T-cell (primary cell): ENCODE measurements at regions of chr14 and their contacts with region 1.

Region 1: DNA sequence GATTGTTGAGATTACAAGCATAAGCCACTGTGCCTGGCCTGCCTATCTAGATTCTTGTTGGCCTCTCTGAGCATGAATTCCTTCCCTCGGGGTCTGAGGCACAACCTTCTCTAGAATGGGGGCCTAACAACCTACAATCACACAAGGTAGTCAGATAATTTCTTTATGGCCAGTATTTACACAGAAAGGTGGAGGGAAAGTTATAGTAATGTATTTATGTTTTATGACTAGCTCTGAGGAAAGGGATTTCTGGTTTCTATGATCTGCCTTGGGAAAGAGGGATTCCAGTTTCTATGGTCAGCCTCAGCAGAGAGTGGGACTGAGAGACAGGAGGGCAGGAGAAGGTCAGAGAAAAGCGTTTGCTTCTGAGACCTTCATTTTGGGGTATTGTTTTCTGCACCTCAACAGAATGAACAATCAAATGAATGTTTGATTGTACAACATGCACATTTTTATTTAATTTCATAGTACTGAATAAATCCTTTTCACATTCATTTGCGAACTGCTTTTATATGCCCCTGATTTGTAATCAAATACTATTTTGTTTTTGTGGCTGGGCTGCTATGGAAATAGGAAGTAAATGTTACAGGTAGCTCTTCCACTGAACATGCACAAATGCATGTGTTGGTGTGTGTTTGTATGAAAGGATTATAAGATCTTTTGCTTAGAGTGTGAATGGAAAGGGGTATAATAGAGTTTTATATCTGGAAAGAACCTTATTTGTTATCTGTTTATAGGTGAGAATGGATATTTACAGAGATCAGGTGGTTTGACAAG is 499.7 kb upstream of the RGS6 start:
- DNase-seq: no peak
- ATAC-seq: no peak
- H3K4me3 ChIP-seq: no peak overlapping the region
- H3K4me3 Mint-ChIP-seq: no peak overlapping the region
- H3K27ac ChIP-seq: no peak overlapping the region
- H3K27ac Mint-ChIP-seq: no peak overlapping the region
- H3K4me1 ChIP-seq: peaks cover 4 to 11% of the 10 kb centered on the region in 2 experiments
- H3K4me1 Mint-ChIP-seq: peaks cover 22 to 36% (median 35%) of the 10 kb centered on the region in 3 donors
- H3K27me3 ChIP-seq: no peaks in the 10 kb centered on the region
- H3K27me3 Mint-ChIP-seq: no peaks in the 10 kb centered on the region

Region 2: DNA sequence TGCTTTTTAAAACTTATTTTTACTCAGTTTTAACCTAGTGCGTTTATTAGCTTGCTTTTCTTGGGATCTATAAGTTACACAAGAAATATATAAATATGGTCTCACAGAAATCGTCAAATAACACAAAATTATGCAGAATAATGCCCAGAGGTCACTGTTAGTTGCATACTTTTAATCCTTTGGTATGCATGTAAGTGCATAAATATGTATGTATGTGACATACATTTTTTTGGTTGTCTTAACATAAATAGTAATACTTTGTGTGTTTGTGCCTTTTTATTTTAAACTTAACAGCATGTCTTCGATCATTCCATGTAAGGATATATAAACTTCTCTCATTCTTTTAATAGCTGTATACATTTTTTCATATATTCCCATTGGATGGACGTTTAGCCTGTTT is 65.7 kb before region 1 on chr14:
- CTCF ChIA-PET with region 1: no interaction called
- POLR2A ChIA-PET with region 1: interaction called in 1 of 2 experiments, 12 read pairs
- DNase-seq: no peak
- ATAC-seq: no peak
- H3K4me3 ChIP-seq: no peak overlapping the region
- H3K4me3 Mint-ChIP-seq: no peak overlapping the region
- H3K27ac ChIP-seq: no peak overlapping the region
- H3K27ac Mint-ChIP-seq: no peak overlapping the region
- H3K4me1 ChIP-seq: peaks cover 0 to 4% of the 10 kb centered on the region in 2 experiments
- H3K4me1 Mint-ChIP-seq: peaks cover 21 to 42% (median 36%) of the 10 kb centered on the region in 3 donors
- H3K27me3 ChIP-seq: no peaks in the 10 kb centered on the region
- H3K27me3 Mint-ChIP-seq: no peaks in the 10 kb centered on the region